ENCODE measurements at regions of chr20 and their contacts with region 1.

Region 1: DNA sequence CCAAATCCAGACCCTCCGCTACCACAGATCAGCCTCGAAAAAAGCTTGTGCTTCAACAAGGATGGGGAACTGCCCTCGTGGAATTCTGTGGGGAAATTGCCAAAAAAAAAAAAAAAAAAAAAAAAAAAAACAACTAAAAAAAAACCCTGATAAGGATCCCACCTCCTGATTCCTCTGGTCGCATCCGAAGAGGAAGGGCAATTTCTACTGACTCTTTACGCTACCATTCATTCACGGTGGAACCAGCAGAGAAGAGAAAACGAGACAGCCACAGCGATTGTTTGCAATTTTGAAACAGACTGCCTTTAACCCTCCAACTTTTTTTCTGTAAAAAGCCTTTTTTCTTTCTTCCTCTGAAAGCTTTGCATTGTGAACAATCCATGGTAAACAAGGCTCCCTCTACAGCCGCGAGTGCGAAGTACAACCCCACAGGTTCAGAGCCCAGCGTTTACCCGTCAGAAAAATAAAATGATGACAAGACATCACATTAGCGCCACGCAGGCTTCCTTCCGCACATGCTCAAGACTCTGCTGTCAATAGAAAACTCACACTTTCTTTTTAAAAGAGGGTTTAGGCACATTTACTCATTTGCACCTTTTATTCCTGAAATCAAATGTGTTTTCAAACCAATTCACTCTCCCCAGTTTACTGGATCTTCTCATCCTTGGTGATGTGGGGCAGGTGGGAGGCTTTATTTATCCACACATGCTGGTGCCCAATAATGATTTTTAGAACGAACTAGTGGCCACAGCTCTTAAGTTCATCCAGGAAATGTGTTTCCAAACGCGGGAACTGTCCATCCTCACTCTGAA is 100.0 kb downstream of the NOL4L start:
- DNase-seq: peak; percentile 77
- H3K4me3 ChIP-seq: peak overlapping the region; percentile 85
- H3K27ac ChIP-seq: peak overlapping the region; percentile 88
- H3K4me1 ChIP-seq: peaks cover 49% of the 10 kb centered on the region
- H3K27me3 ChIP-seq: no peaks in the 10 kb centered on the region
- CTCF ChIP-seq: peak; percentile 88

Region 2: GRCh38 chr20:30922129-30922528 is 1563.0 kb before region 1 on chr20:
- intact Hi-C with region 1: no loop called
- DNase-seq: no peak
- H3K4me3 ChIP-seq: no peak overlapping the region
- H3K27ac ChIP-seq: no peak overlapping the region
- H3K4me1 ChIP-seq: no peaks in the 10 kb centered on the region
- H3K27me3 ChIP-seq: peaks cover 21% of the 10 kb centered on the region
- CTCF ChIP-seq: no peak

Region 3: GRCh38 chr20:32359633-32360332 is 125.4 kb before region 1 on chr20:
- intact Hi-C with region 1: loop called (anchors 10 kb)
- DNase-seq: no peak
- H3K4me3 ChIP-seq: peak overlapping the region; percentile 97
- H3K27ac ChIP-seq: peak overlapping the region; percentile 98
- H3K4me1 ChIP-seq: peaks cover 72% of the 10 kb centered on the region
- H3K27me3 ChIP-seq: no peaks in the 10 kb centered on the region
- CTCF ChIP-seq: no peak

Measured in left ventricle myocardium inferior (tissue), 1 donor.